ENCODE measurements at regions of chr2 and their contacts with region 1.

Region 1: GRCh38 chr2:37635504-37636380 is 35.7 kb downstream of the CDC42EP3 start:
- DNase-seq: peak; percentile 87
- H3K4me3 Mint-ChIP-seq: peak overlapping the region; percentile 38
- H3K27ac Mint-ChIP-seq: peak overlapping the region; percentile 94
- H3K4me1 Mint-ChIP-seq: peaks cover 65% of the 10 kb centered on the region
- H3K27me3 Mint-ChIP-seq: no peaks in the 10 kb centered on the region

Region 2: DNA sequence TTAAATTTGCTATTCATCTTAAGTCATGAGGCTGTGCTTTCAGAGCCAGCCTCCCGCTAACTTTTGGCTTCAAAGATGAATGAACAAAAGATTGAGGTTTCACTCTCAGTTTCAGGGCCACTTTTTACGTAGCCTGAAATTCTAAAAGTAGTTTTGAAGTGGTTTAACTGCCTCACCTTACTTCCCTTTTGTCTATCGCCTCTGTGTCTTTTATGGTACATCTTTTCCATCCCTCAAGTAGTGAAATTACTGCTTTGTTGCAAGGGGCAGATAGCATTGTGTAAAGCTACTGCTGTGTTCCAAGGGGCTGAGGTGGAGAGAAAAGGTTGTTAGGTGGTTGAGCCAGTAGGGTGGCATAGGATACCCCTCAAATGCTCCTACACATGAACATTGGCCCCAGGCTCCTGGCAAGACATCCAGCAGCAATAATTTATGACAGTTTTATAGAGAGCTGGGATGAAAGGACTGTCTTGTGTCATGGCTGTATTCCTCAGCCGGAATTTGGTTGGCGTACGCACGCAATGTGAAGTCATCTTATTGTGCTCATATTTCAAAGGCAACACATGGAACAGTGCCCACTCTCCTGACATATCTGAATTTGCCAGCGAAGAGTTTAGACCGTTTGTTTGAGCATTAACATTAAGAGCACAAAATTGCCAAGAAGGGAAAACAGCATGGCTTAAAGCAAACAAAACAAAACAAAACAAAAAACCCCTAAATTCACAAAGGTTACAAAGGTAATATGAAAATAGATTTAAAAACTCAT is 259.1 kb before region 1 on chr2:
- CTCF ChIA-PET with region 1: no interaction called
- POLR2A ChIA-PET with region 1: no interaction called
- intact Hi-C with region 1: loop called (anchors 5 kb)
- DNase-seq: peak; percentile 53
- H3K4me3 Mint-ChIP-seq: peak overlapping the region; percentile 20
- H3K27ac Mint-ChIP-seq: peak overlapping the region; percentile 58
- H3K4me1 Mint-ChIP-seq: peaks cover 30% of the 10 kb centered on the region
- H3K27me3 Mint-ChIP-seq: peaks cover 53% of the 10 kb centered on the region

Region 3: GRCh38 chr2:37489041-37489456 is 146.7 kb before region 1 on chr2:
- CTCF ChIA-PET with region 1: no interaction called
- POLR2A ChIA-PET with region 1: no interaction called
- intact Hi-C with region 1: no loop called
- DNase-seq: no peak
- H3K4me3 Mint-ChIP-seq: no peak overlapping the region
- H3K27ac Mint-ChIP-seq: no peak overlapping the region
- H3K4me1 Mint-ChIP-seq: no peaks in the 10 kb centered on the region
- H3K27me3 Mint-ChIP-seq: no peaks in the 10 kb centered on the region

Region 4: DNA sequence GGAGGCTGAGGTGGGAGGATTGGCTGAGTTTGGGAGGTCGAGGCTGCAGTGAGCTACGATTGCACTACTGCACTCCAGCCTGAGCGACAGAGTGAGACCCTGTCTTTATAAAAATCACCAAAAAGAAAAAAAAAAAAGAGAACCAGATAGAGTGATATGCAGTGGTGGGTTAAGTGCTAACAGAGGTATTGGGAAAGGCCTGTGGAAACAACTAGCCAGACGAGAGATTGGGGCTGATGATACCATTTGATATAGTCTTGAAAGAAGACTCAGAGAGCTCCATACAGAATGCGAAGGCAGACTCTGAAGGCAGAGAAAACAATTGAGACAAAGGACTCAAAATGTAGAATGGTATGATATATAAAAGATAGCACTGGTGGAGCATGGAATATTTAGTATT is 98.4 kb before region 1 on chr2:
- CTCF ChIA-PET with region 1: no interaction called
- POLR2A ChIA-PET with region 1: no interaction called
- intact Hi-C with region 1: no loop called
- DNase-seq: no peak
- H3K4me3 Mint-ChIP-seq: no peak overlapping the region
- H3K27ac Mint-ChIP-seq: no peak overlapping the region
- H3K4me1 Mint-ChIP-seq: no peaks in the 10 kb centered on the region
- H3K27me3 Mint-ChIP-seq: peaks cover 1% of the 10 kb centered on the region

Region 5: DNA sequence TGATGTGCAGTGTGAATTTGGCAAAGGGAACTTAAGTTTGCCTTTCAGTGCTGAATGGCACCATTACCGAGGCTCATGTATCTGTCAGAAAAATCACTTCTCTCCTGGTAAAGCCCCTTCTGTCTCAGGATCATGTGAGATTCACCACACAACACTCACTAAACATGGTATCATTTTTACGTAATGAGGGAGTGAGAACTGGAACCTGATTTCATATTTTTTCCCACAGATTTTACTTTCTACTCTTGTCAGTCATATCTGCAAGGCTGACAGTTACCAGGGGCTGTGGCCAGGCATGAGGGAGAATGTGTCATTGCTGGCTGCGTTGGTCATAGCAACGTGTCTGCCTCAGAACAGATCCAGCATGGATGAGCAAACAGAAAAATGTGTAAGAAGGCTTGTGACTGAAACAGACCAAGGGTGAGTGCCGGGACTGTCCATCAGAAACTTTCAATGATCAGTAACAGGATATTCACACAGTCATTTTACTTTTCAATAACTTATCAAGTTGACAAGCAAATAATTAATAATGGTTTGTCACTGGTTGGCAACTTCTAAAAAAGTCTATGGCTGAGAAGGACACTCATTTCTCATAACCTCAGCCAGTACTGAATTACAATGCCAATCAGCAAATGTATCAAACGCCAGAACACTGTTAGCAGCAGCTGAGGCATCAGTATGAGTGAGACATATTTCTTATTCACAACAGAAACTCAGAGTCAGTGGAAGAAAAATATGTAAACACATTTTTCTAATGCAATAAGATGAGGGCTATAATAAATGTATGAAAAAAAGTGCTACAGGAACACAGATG is 64.8 kb before region 1 on chr2:
- CTCF ChIA-PET with region 1: no interaction called
- POLR2A ChIA-PET with region 1: no interaction called
- intact Hi-C with region 1: loop called (anchors 1 kb)
- DNase-seq: peak; percentile 85
- H3K4me3 Mint-ChIP-seq: no peak overlapping the region
- H3K27ac Mint-ChIP-seq: peak overlapping the region; percentile 16
- H3K4me1 Mint-ChIP-seq: peaks cover 29% of the 10 kb centered on the region
- H3K27me3 Mint-ChIP-seq: no peaks in the 10 kb centered on the region

Region 6: GRCh38 chr2:37600735-37601134 is 35.0 kb before region 1 on chr2:
- CTCF ChIA-PET with region 1: no interaction called
- POLR2A ChIA-PET with region 1: no interaction called
- intact Hi-C with region 1: loop called (anchors 1 kb)
- DNase-seq: no peak
- H3K4me3 Mint-ChIP-seq: peak overlapping the region; percentile 67
- H3K27ac Mint-ChIP-seq: peak overlapping the region; percentile 80
- H3K4me1 Mint-ChIP-seq: peaks cover 46% of the 10 kb centered on the region
- H3K27me3 Mint-ChIP-seq: no peaks in the 10 kb centered on the region

Region 7: DNA sequence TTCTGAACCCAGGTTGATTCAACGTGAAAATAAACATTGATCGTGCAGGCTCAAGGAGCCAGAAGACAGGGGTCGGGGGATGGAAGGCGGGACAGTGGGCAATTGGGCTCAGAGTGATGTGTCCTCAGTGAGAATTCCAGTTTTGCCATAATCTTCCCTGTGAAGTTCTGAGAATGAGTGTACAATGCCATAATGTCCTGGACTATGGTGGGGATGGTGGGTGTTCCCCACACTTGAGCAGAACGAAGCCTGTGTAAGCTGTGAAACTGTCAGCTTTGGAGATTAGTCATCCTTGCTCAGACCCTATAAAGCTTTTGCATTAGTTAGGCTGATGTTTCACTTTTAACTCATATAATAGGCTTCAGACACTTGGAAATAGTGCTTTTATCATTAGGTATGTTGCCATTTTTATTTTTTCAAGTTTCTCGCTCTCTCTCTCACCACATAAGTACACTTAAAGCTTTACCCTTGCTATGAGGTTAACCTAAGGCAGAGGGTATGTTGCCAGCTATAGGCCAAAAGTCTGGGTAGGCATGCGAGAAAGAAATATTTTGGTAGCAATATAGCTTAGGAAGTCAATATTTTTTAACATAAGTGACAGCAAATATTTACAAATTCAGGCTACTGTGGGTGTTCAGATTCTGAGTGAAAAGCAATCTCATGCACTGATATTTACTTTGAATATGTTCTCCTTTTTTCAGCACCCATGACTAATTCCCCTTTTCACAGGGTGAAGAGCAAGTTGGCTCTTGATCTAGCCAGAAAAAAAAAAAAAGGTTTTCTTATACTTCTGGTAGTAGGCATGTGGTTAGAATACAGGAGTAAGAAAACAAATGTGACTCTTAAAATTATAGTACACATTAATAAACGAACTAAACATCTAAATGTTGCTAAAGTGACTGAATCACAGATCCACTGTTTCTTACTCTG is 11.5 kb before region 1 on chr2:
- CTCF ChIA-PET with region 1: interaction called, 3 read pairs
- POLR2A ChIA-PET with region 1: interaction called, 20 read pairs
- intact Hi-C with region 1: loop called (anchors 1 kb)
- DNase-seq: peak; percentile 50
- H3K4me3 Mint-ChIP-seq: peak overlapping the region; percentile 45
- H3K27ac Mint-ChIP-seq: peak overlapping the region; percentile 83
- H3K4me1 Mint-ChIP-seq: peaks cover 80% of the 10 kb centered on the region
- H3K27me3 Mint-ChIP-seq: no peaks in the 10 kb centered on the region

Region 8: GRCh38 chr2:37653805-37654378 is 18.1 kb after region 1 on chr2:
- CTCF ChIA-PET with region 1: no interaction called
- POLR2A ChIA-PET with region 1: interaction called, 3 read pairs
- intact Hi-C with region 1: loop called (anchors 1 kb)
- DNase-seq: peak; percentile 63
- H3K4me3 Mint-ChIP-seq: peak overlapping the region; percentile 28
- H3K27ac Mint-ChIP-seq: peak overlapping the region; percentile 83
- H3K4me1 Mint-ChIP-seq: peaks cover 94% of the 10 kb centered on the region
- H3K27me3 Mint-ChIP-seq: no peaks in the 10 kb centered on the region

Region 9: DNA sequence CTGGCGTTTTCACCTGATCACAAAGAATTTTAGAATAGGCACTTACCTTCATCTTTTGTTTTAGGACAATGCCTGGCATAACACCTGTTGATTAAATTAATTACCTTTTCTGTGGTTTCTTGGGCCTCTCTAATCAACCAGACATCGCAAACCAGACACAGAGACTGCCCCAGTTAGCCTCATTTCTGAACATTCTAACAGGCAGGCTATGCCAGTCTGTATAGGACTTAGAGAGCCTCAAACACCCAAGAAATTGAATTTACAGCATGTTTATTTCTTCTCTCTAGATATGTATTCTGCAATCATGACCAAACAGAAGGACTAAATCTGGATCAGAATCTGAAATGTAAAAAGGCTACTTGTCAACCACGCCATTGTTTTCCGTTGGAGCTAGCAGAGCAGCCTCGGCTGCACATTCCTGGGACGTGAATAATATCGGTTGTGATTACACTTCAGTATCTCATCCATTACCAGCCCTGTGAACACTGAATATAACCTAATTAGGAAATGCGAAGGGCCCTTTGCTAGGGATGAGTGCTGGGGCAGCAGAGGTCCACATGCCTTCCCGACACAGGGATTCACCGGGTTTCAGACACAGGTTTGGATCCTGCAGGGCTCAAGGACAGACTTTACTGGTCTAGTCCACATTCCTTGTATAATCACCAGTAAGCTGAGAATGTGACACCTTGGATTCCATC is 53.2 kb after region 1 on chr2:
- CTCF ChIA-PET with region 1: no interaction called
- POLR2A ChIA-PET with region 1: no interaction called
- intact Hi-C with region 1: loop called (anchors 1 kb)
- DNase-seq: no peak
- H3K4me3 Mint-ChIP-seq: no peak overlapping the region
- H3K27ac Mint-ChIP-seq: no peak overlapping the region
- H3K4me1 Mint-ChIP-seq: peaks cover 23% of the 10 kb centered on the region
- H3K27me3 Mint-ChIP-seq: no peaks in the 10 kb centered on the region

Region 10: DNA sequence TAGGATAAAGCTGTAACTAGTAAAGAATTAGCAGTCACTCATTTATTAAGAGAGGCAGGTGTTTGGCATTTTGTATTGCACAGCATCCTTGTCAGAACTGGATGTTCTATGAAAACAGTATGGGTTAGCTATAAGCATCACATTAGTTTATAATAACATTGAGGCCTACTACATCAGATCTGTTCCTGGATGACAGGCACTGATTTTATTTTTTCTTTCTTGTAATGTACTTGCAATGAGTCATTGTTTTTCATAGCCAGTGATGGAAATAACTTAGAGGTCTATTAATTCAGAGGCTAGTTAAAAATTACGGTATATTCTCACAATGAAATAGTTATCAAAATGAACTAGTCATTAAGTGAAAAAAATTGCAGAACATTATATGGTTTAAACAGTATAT is 276.3 kb after region 1 on chr2:
- CTCF ChIA-PET with region 1: no interaction called
- POLR2A ChIA-PET with region 1: no interaction called
- intact Hi-C with region 1: no loop called
- DNase-seq: no peak
- H3K4me3 Mint-ChIP-seq: no peak overlapping the region
- H3K27ac Mint-ChIP-seq: no peak overlapping the region
- H3K4me1 Mint-ChIP-seq: no peaks in the 10 kb centered on the region
- H3K27me3 Mint-ChIP-seq: peaks cover under 1% of the 10 kb centered on the region

Region 11: DNA sequence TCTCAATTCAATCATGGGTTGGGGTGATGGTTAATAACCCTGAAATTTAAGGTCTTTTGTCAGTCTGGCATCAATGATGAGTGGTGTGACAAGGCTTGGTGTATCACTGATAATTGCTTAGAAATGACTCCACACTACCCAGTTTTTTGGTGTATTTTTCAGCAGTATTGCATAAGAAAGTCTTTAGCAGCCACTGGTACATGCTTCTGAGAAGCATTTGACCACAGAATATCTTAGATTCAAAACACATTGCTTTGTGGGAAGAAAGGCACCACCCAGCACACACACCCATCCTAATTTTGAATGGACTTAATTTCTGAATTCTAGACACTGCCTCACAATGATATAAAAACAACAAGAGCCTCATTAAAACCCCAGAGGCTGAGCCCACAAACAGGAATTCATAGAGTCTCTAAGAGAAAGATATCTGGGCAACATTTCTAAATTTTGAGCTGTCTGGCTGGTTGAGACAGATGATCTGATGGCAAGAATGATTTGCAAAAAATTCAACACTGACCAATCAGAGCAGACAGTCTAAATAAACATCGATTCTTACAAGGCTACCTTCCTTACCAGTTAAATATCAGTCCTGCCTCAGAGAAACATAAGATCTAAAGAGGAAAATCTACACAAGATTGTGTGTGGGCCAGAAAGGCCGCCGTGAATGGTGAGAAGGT is 554.9 kb after region 1 on chr2:
- CTCF ChIA-PET with region 1: no interaction called
- POLR2A ChIA-PET with region 1: no interaction called
- intact Hi-C with region 1: no loop called
- DNase-seq: no peak
- H3K4me3 Mint-ChIP-seq: no peak overlapping the region
- H3K27ac Mint-ChIP-seq: no peak overlapping the region
- H3K4me1 Mint-ChIP-seq: no peaks in the 10 kb centered on the region
- H3K27me3 Mint-ChIP-seq: no peaks in the 10 kb centered on the region